ENCODE measurements at regions of chr1 and their contacts with region 1.

Region 1: DNA sequence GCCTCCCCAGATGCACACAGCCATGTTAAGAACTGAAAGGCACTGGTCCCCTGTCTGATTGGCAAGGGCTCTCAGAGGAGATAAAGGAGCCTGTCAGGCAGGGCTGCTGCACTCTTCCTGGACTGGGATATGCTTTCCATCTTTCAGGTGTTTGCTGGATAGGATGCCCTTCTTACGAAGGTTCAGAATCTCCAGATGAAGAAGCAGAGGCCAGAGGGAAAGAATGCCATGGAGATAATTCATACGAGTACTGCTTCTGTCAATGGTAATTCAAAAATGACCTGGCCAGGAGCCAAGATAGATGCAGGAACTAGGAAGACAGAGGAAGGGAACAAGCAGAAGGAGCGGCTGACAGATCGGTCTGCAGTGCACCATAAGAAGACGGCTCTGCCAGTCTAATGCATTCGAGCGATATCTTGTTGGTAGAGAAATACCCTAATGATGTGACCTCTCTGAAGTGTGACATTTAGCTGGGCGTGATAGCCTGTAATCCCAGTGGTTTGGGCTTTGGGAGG is 16.6 kb upstream of the ATP2B4 start:
- H3K4me3 Mint-ChIP-seq: no peak overlapping the region
- H3K27ac Mint-ChIP-seq: no peak overlapping the region
- H3K4me1 Mint-ChIP-seq: peaks cover 30% of the 10 kb centered on the region
- H3K27me3 Mint-ChIP-seq: peaks cover 9% of the 10 kb centered on the region

Region 2: GRCh38 chr1:203553506-203553905 is 56.5 kb before region 1 on chr1:
- intact Hi-C with region 1: loop called (anchors 2 kb)
- H3K4me3 Mint-ChIP-seq: no peak overlapping the region
- H3K27ac Mint-ChIP-seq: no peak overlapping the region
- H3K4me1 Mint-ChIP-seq: no peaks in the 10 kb centered on the region
- H3K27me3 Mint-ChIP-seq: peaks cover 11% of the 10 kb centered on the region